ENCODE measurements at regions of chr18 and their contacts with region 1.

Region 1: DNA sequence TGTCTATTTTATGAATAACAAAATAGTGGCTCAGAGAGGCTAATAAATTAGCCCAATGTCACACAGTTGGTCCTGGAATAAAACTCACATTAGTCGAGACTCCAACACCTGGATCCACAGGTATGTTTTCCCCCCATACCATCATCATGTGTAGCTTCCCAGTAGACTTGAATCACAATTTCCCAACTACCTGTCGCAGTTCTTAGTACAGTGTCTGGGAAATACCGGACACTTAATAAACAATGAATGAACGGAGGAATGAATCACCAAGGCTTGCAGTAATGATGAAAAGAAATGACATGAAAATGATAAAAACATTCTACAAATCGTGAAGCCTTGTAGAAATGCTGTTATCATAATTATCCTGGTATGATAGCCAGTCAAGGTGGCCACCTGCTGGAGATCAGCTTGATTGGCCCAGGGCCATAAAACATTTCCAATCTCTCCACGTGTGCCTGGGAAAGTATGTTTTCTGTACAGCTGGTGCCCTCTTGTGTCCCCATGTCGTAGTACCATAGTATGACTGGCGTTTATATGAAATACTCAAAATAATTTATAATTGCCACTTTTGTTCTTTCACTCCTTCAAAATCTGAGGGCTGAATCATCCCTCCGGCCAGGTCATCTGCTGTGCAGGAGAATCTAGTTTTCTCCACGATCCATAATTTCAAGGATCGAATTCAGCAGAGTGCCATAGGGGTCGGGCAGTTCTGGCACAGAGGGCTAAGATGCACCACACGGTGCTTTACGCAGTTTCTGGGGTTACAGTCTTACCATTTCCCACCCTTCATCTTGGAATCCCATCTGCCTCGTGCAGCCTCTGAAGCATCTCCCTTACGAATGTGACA is 95.4 kb downstream of the LAMA1 start:
- DNase-seq: peak; percentile 92
- ATAC-seq: peak; percentile 97
- H3K4me3 ChIP-seq: no peak overlapping the region
- H3K27ac ChIP-seq: no peak overlapping the region
- H3K4me1 ChIP-seq: no peaks in the 10 kb centered on the region
- H3K27me3 ChIP-seq: peaks cover 30% of the 10 kb centered on the region
- CTCF ChIP-seq: peak; percentile 95

Region 2: DNA sequence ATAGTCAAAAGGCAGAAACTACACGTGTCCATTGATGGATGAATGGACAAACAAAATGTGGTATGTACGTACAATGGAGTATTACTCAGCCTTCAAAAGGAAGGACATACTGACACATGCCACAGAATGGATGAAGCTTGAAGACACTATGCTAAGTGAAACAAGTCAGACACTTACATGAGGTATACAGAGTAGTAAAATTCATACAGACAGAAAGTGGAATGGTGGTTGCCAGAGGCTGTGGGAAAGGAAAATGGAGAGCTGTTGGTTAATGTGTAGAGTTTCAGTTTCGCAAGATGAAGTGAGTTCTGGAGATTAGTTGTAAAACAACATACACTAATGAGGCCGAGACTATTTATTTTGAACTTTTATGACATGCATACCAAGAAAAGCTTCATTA is 1411.0 kb before region 1 on chr18:
- CTCF ChIA-PET with region 1: no interaction called
- POLR2A ChIA-PET with region 1: no interaction called
- intact Hi-C with region 1: no loop called
- DNase-seq: no peak
- ATAC-seq: no peak
- H3K4me3 ChIP-seq: no peak overlapping the region
- H3K27ac ChIP-seq: no peak overlapping the region
- H3K4me1 ChIP-seq: no peaks in the 10 kb centered on the region
- H3K27me3 ChIP-seq: no peaks in the 10 kb centered on the region
- CTCF ChIP-seq: no peak

Region 3: DNA sequence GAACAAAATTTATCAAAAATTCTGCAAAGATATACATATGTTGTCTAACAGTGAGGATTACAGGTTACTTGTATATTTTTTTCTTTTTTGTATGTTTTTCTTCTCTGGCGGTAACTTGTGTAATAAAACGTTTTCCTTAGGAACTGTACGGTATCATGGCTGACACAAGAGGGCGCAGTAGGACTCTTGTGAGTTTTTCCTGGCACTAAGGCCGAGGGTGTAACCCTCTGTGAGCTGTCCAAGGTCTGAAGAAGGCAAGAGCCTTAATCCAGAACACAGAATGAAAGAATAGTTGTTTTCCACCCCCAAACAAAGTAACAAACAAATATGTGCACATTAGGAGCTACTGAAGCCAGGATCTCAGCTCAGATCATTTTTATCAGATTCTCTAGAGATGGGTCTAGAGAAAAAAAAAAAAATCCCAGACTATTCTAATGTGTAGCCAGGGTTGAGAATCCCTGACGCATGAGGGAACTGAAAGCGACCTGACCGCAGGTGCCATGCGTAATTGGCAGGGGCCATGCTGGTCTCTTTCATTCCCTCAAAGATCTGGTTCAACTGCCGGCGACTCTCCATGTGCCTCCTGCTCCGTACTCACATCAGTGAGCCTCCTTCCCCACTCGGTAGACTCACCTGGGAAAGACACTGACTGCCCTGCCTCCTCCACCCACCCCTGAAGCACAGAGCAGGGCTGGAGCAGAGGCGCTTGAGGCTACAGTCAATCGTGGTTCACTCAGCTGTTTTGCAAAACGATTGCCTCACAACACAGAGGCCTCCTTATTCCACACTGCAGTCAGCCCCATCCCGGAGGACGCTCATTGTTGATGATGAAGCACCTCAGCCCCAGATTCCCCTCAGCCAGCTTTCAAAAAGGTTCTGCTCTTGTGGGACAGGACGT is 1153.8 kb before region 1 on chr18:
- CTCF ChIA-PET with region 1: no interaction called
- POLR2A ChIA-PET with region 1: no interaction called
- intact Hi-C with region 1: loop called (anchors 5 kb)
- DNase-seq: peak; percentile 94
- ATAC-seq: peak; percentile 100
- H3K4me3 ChIP-seq: no peak overlapping the region
- H3K27ac ChIP-seq: no peak overlapping the region
- H3K4me1 ChIP-seq: no peaks in the 10 kb centered on the region
- H3K27me3 ChIP-seq: no peaks in the 10 kb centered on the region
- CTCF ChIP-seq: peak; percentile 94

Region 4: GRCh38 chr18:6482198-6482977 is 539.8 kb before region 1 on chr18:
- CTCF ChIA-PET with region 1: interaction called, 11 read pairs
- POLR2A ChIA-PET with region 1: no interaction called
- intact Hi-C with region 1: no loop called
- DNase-seq: peak; percentile 45
- ATAC-seq: peak; percentile 89
- H3K4me3 ChIP-seq: no peak overlapping the region
- H3K27ac ChIP-seq: no peak overlapping the region
- H3K4me1 ChIP-seq: 0 out of 2 replicates have a peak, but pooled peaks cover 4% of the 10 kb centered on the region
- H3K27me3 ChIP-seq: peaks cover 3% of the 10 kb centered on the region; the same call in 1 of the 2 replicates
- CTCF ChIP-seq: peak; percentile 70

Region 5: GRCh38 chr18:6920099-6920899 is 101.9 kb before region 1 on chr18:
- CTCF ChIA-PET with region 1: interaction called, 11 read pairs
- POLR2A ChIA-PET with region 1: no interaction called
- intact Hi-C with region 1: loop called (anchors 1 kb)
- DNase-seq: peak; percentile 89
- ATAC-seq: peak; percentile 83
- H3K4me3 ChIP-seq: no peak overlapping the region
- H3K27ac ChIP-seq: no peak overlapping the region
- H3K4me1 ChIP-seq: no peaks in the 10 kb centered on the region
- H3K27me3 ChIP-seq: peaks cover 43% of the 10 kb centered on the region
- CTCF ChIP-seq: peak; percentile 94

Region 6: GRCh38 chr18:8212893-8213780 is 1190.9 kb after region 1 on chr18:
- CTCF ChIA-PET with region 1: interaction called, 21 read pairs
- POLR2A ChIA-PET with region 1: no interaction called
- intact Hi-C with region 1: no loop called
- DNase-seq: peak; percentile 80
- ATAC-seq: peak; percentile 75
- H3K4me3 ChIP-seq: no peak overlapping the region
- H3K27ac ChIP-seq: no peak overlapping the region
- H3K4me1 ChIP-seq: peaks cover 11% of the 10 kb centered on the region
- H3K27me3 ChIP-seq: no peaks in the 10 kb centered on the region
- CTCF ChIP-seq: no peak

Region 7: GRCh38 chr18:8443505-8443904 is 1421.3 kb after region 1 on chr18:
- CTCF ChIA-PET with region 1: no interaction called
- POLR2A ChIA-PET with region 1: interaction called, 12 read pairs
- intact Hi-C with region 1: no loop called
- DNase-seq: peak; percentile 62
- ATAC-seq: peak; percentile 69
- H3K4me3 ChIP-seq: no peak overlapping the region
- H3K27ac ChIP-seq: no peak overlapping the region
- H3K4me1 ChIP-seq: peaks cover 28% of the 10 kb centered on the region
- H3K27me3 ChIP-seq: no peaks in the 10 kb centered on the region
- CTCF ChIP-seq: no peak